ENCODE measurements at regions of chrX and their contacts with region 1.

Region 1: GRCh38 chrX:27583976-27584375 is 6.2 kb upstream of the DCAF8L2 start:
- DNase-seq: no peak
- H3K4me3 Mint-ChIP-seq: no peak overlapping the region
- H3K27ac Mint-ChIP-seq: no peak overlapping the region
- H3K4me1 Mint-ChIP-seq: no peaks in the 10 kb centered on the region
- H3K27me3 Mint-ChIP-seq: no peaks in the 10 kb centered on the region

Region 2: GRCh38 chrX:27660878-27661277 is 76.9 kb after region 1 on chrX:
- intact Hi-C with region 1: no loop called
- DNase-seq: no peak
- H3K4me3 Mint-ChIP-seq: no peak overlapping the region
- H3K27ac Mint-ChIP-seq: no peak overlapping the region
- H3K4me1 Mint-ChIP-seq: no peaks in the 10 kb centered on the region
- H3K27me3 Mint-ChIP-seq: no peaks in the 10 kb centered on the region

Region 3: GRCh38 chrX:27715610-27716009 is 131.6 kb after region 1 on chrX:
- intact Hi-C with region 1: no loop called
- DNase-seq: no peak
- H3K4me3 Mint-ChIP-seq: no peak overlapping the region
- H3K27ac Mint-ChIP-seq: no peak overlapping the region
- H3K4me1 Mint-ChIP-seq: no peaks in the 10 kb centered on the region
- H3K27me3 Mint-ChIP-seq: no peaks in the 10 kb centered on the region

Region 4: GRCh38 chrX:27765718-27766117 is 181.7 kb after region 1 on chrX:
- intact Hi-C with region 1: no loop called
- DNase-seq: no peak
- H3K4me3 Mint-ChIP-seq: no peak overlapping the region
- H3K27ac Mint-ChIP-seq: no peak overlapping the region
- H3K4me1 Mint-ChIP-seq: no peaks in the 10 kb centered on the region
- H3K27me3 Mint-ChIP-seq: no peaks in the 10 kb centered on the region

Region 5: DNA sequence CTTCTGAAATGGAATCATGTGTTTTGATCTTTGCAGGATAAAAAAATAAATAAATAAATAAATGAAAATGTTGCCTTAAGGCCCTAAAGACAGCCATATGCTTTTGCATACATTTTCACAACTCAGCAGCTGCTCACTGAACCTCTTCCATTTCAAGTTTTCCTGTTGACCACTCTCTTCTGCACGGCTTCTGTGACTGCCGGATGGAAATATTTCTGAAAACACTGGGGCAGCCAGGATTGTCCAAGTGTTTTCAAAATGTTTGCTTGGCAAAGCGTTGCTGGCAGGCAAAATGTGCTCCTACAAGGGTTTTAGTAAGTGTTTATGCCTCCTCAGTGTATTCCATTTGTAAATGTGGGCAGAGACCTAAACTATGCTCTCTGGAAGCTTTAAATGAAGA is 795.1 kb after region 1 on chrX:
- intact Hi-C with region 1: loop called (anchors 10 kb)
- DNase-seq: no peak
- H3K4me3 Mint-ChIP-seq: no peak overlapping the region
- H3K27ac Mint-ChIP-seq: no peak overlapping the region
- H3K4me1 Mint-ChIP-seq: no peaks in the 10 kb centered on the region
- H3K27me3 Mint-ChIP-seq: no peaks in the 10 kb centered on the region